CD8-positive, alpha-beta T cell (primary cell): ENCODE measurements at regions of chr13 and their contacts with region 1.

Region 1: GRCh38 chr13:19959831-19960652 is 1.5 kb downstream of the ZMYM2 start:
- DNase-seq: peak; percentile 69 to 95 (median 84)
- ATAC-seq: peak; percentile 50
- H3K4me3 ChIP-seq: peak overlapping the region; percentile 56 to 88
- H3K4me3 Mint-ChIP-seq: peak overlapping the region; percentile 97
- H3K27ac ChIP-seq: peak overlapping the region; percentile 59 to 79
- H3K27ac Mint-ChIP-seq: peak overlapping the region; percentile 98
- H3K4me1 ChIP-seq: peaks cover 29% of the 10 kb centered on the region
- H3K4me1 Mint-ChIP-seq: peaks cover 45% of the 10 kb centered on the region
- H3K27me3 ChIP-seq: no peaks in the 10 kb centered on the region
- H3K27me3 Mint-ChIP-seq: no peaks in the 10 kb centered on the region
- CTCF ChIP-seq: peak; percentile 94

Region 2: GRCh38 chr13:19782049-19782726 is 177.9 kb before region 1 on chr13:
- CTCF ChIA-PET with region 1: no interaction called
- POLR2A ChIA-PET with region 1: interaction called, 6 read pairs
- intact Hi-C with region 1: loop called (anchors 1 to 2 kb)
- DNase-seq: peak; percentile 22 to 73 (median 55)
- ATAC-seq: peak; percentile 54
- H3K4me3 ChIP-seq: peak overlapping the region; percentile 94 to 95
- H3K4me3 Mint-ChIP-seq: peak overlapping the region; percentile 99
- H3K27ac ChIP-seq: peak overlapping the region; percentile 89 to 94
- H3K27ac Mint-ChIP-seq: peak overlapping the region; percentile 99
- H3K4me1 ChIP-seq: no peaks in the 10 kb centered on the region
- H3K4me1 Mint-ChIP-seq: peaks cover 6% of the 10 kb centered on the region
- H3K27me3 ChIP-seq: no peaks in the 10 kb centered on the region
- H3K27me3 Mint-ChIP-seq: no peaks in the 10 kb centered on the region
- CTCF ChIP-seq: no peak

Region 3: DNA sequence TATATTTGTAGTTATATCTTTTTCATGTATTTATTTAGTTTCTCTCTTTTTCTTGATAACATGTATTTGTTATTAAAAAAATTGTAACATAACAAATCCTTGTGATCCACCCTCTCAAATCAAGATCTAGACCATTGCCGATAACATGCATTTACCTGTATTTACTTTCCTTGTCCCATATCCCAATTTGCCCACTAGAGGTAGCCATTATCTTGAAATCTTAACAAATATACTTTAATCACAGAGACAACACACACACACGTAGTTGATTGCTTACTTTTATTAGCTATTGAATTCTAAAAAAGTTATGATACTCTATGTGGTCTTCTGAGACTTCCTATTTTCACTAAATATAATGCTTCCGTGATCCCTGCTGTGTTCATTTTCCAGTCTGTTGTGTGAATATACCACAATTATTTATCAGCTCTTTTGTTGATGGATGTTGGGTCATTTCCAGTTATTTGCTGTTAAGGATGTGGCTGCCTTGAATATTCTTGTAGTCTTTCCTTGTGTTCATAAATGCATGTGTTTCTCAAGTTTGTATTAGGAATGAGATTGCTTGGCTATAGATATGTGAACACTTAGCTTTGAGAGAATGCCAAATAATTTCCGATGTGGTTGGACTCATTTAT is 32.8 kb before region 1 on chr13:
- CTCF ChIA-PET with region 1: interaction called, 7 read pairs
- POLR2A ChIA-PET with region 1: no interaction called
- intact Hi-C with region 1: loop called (anchors 1 to 2 kb)
- DNase-seq: peak in 2 of 9 experiments; percentile 51 to 64
- ATAC-seq: peak; percentile 52
- H3K4me3 ChIP-seq: no peak overlapping the region
- H3K4me3 Mint-ChIP-seq: no peak overlapping the region
- H3K27ac ChIP-seq: no peak overlapping the region
- H3K27ac Mint-ChIP-seq: no peak overlapping the region
- H3K4me1 ChIP-seq: no peaks in the 10 kb centered on the region
- H3K4me1 Mint-ChIP-seq: no peaks in the 10 kb centered on the region
- H3K27me3 ChIP-seq: no peaks in the 10 kb centered on the region
- H3K27me3 Mint-ChIP-seq: no peaks in the 10 kb centered on the region
- CTCF ChIP-seq: peak; percentile 39

Region 4: GRCh38 chr13:20049558-20050473 is 89.8 kb after region 1 on chr13:
- CTCF ChIA-PET with region 1: no interaction called
- POLR2A ChIA-PET with region 1: no interaction called
- intact Hi-C with region 1: loop called in 1 of 2 experiments (anchors 10 kb)
- DNase-seq: peak in 1 of 9 experiments; percentile 10
- ATAC-seq: no peak
- H3K4me3 ChIP-seq: no peak overlapping the region
- H3K4me3 Mint-ChIP-seq: peak overlapping the region; percentile 60
- H3K27ac ChIP-seq: peak overlapping the region in 1 of 2 experiments; percentile 13
- H3K27ac Mint-ChIP-seq: peak overlapping the region; percentile 61
- H3K4me1 ChIP-seq: peaks cover 13% of the 10 kb centered on the region
- H3K4me1 Mint-ChIP-seq: peaks cover 23% of the 10 kb centered on the region
- H3K27me3 ChIP-seq: no peaks in the 10 kb centered on the region
- H3K27me3 Mint-ChIP-seq: no peaks in the 10 kb centered on the region
- CTCF ChIP-seq: no peak

Region 5: DNA sequence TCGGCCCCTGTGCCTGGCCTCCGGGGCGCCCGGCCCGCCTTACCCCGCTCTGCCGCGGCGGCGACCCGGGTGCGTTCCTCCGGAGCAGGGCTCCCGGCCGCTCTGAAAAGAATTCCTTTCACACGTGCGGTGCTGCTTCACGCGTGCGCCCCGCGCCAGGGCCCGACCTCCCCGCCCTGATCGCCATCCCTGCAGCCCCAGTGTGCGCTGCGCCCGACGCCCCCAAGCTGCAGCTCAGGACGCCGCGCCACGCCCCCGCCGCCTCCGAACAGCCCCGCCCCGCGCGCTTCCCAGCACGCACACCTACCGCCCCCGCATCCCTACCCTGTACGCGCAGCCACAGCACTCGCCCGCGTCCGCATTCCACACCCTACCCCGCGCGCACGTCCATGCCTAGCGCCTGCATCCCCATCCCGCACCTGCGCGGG is 200.8 kb after region 1 on chr13 and contains the start of gene GJA3:
- CTCF ChIA-PET with region 1: no interaction called
- POLR2A ChIA-PET with region 1: no interaction called
- intact Hi-C with region 1: loop called in 1 of 2 experiments (anchors 10 kb)
- DNase-seq: peak; percentile 12 to 80 (median 70)
- ATAC-seq: peak; percentile 69
- H3K4me3 ChIP-seq: peak within 1 kb of the TSS; percentile 42 to 71
- H3K4me3 Mint-ChIP-seq: peak within 1 kb of the TSS; percentile 84
- H3K27ac ChIP-seq: peak within 1 kb of the TSS; percentile 40 to 48
- H3K27ac Mint-ChIP-seq: no peak within 1 kb of the TSS
- H3K4me1 ChIP-seq: peaks cover 12% of the 10 kb centered on the region
- H3K4me1 Mint-ChIP-seq: peaks cover 14% of the 10 kb centered on the region
- H3K27me3 ChIP-seq: peaks cover 0 to 4% of the 10 kb centered on the region in 2 experiments
- H3K27me3 Mint-ChIP-seq: peaks cover 31% of the 10 kb centered on the region
- CTCF ChIP-seq: no peak
- total RNA-seq, gene GJA3: 0.08 TPM in 1 of 2 experiments, not detected in the other

Region 6: GRCh38 chr13:20197361-20197834 is 237.4 kb after region 1 on chr13:
- CTCF ChIA-PET with region 1: no interaction called
- POLR2A ChIA-PET with region 1: no interaction called
- intact Hi-C with region 1: no loop called
- DNase-seq: peak in 4 of 9 experiments; percentile 24 to 71 (median 46)
- ATAC-seq: peak; percentile 76
- H3K4me3 ChIP-seq: no peak overlapping the region
- H3K4me3 Mint-ChIP-seq: no peak overlapping the region
- H3K27ac ChIP-seq: no peak overlapping the region
- H3K27ac Mint-ChIP-seq: no peak overlapping the region
- H3K4me1 ChIP-seq: peaks cover 16% of the 10 kb centered on the region
- H3K4me1 Mint-ChIP-seq: peaks cover 18% of the 10 kb centered on the region
- H3K27me3 ChIP-seq: peaks cover 21 to 38% of the 10 kb centered on the region in 2 experiments
- H3K27me3 Mint-ChIP-seq: peaks cover 42% of the 10 kb centered on the region
- CTCF ChIP-seq: peak; percentile 78

Region 7: GRCh38 chr13:21603531-21604448 is 1643.7 kb after region 1 on chr13 and contains the start of gene MICU2:
- CTCF ChIA-PET with region 1: no interaction called
- POLR2A ChIA-PET with region 1: no interaction called
- intact Hi-C with region 1: loop called (anchors 5 to 10 kb)
- DNase-seq: peak; percentile 91 to 98 (median 96)
- ATAC-seq: peak; percentile 92
- H3K4me3 ChIP-seq: peak within 1 kb of the TSS; percentile 73 to 85
- H3K4me3 Mint-ChIP-seq: peak within 1 kb of the TSS; percentile 84
- H3K27ac ChIP-seq: peak within 1 kb of the TSS; percentile 84 to 97
- H3K27ac Mint-ChIP-seq: peak within 1 kb of the TSS; percentile 94
- H3K4me1 ChIP-seq: peaks cover 24% of the 10 kb centered on the region
- H3K4me1 Mint-ChIP-seq: peaks cover 47% of the 10 kb centered on the region
- H3K27me3 ChIP-seq: no peaks in the 10 kb centered on the region
- H3K27me3 Mint-ChIP-seq: peaks cover 9% of the 10 kb centered on the region
- CTCF ChIP-seq: no peak
- total RNA-seq, gene MICU2: 28.3 to 36.0 TPM